ENCODE measurements at regions of chr17 and their contacts with region 1.

Region 1: GRCh38 chr17:64920026-64920418 is 744 bp upstream of the LRRC37A3 start:
- DNase-seq: peak; percentile 34
- ATAC-seq: peak; percentile 8
- H3K4me3 ChIP-seq: peak overlapping the region; percentile 79
- H3K27ac ChIP-seq: no peak overlapping the region
- H3K4me1 ChIP-seq: peaks cover 5% of the 10 kb centered on the region
- H3K27me3 ChIP-seq: no peaks in the 10 kb centered on the region
- CTCF ChIP-seq: no peak

Region 2: DNA sequence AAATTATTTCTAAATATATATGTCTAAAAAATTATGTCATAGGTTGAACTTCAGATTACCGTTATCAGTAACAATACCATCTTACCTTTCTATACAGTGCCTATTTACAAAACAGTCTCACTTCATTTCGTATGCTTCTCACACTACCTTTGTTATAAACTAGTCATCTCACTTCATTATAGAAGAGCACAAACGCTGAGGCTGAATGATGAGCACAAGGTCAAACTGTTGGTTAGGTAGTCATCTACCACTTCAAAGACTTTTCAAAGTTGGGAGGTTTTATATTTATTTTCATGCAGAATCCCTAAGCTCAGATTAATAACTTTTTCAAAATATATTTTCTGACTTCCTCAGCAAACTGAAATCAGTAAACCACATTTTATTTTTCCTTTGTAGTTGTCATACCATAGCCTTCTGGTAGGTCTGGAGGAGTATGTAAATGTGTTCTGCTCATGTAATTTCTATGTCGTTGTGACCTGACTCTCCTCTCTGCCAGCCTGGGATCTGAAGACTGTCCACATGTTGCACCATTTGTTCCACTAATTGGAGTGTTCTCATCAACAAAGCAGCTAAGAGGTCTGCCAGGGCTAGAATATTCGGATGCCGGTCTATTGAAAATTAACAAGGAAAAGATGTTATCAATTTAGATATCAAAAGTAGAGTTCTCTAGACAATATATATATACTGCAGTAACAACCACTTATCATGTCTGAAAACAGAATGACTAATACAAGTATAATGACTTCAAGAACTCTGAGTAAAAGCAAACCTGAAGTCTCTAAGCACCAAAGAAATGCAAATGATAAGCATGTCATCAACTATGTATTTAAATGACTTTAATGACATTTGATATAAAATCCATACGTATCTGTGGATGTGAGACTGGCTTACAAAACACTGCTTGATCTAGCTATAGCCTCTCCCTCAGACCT is 339.4 kb before region 1 on chr17:
- CTCF ChIA-PET with region 1: interaction called, 12 read pairs
- POLR2A ChIA-PET with region 1: no interaction called
- intact Hi-C with region 1: no loop called
- DNase-seq: no peak
- ATAC-seq: 0 out of 2 replicates have a peak, but pooled peaks have one; percentile 20
- H3K4me3 ChIP-seq: no peak overlapping the region
- H3K27ac ChIP-seq: no peak overlapping the region
- H3K4me1 ChIP-seq: peaks cover 22% of the 10 kb centered on the region
- H3K27me3 ChIP-seq: no peaks in the 10 kb centered on the region
- CTCF ChIP-seq: no peak

Measured in PC-3 (cell line).